ENCODE measurements at regions of chr19 and their contacts with region 1.

Region 1: DNA sequence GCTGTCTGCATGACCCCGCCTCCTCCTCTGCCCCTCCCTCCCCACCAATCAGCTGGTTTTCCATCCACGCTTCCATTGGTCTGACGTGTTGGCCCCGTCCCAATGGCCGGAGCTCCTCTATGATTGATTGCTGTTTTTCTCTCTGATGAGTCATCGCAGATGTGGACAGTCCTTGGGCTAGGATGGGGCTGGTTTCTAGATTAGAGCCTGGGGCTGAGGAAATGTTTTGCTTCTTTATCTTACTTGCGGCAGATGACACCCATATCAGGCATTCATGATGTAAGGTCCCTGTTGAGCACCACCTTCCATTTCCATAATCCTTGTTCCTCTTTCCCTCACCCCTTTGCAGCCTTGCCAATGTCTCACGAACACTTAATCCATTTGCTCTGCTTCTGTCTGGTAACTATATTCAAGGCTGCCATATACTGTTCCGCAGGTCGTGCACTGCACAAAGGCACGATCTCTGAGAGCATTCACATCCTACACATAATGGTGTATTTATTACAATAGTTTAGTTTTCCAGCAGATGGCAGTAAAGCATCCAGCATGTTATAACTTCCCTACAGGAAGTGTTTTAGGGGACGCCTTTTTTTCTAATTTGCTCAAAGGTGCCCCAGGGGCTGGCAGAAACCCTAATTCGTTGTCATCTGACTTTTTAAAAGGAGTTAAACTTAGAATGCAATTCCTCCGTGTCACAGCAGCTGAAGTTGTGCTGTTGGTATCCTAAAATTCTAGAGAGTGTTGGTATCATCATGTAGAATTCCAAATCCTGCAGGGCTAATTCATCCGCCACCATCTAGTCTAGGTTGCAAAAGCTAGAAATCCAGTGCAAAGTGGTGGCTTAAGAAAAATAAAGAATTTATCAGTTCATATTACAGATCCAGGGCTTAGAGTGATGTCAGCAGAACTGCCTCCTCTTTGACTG is 73.5 kb downstream of the MAP4K1 start:
- DNase-seq: peak; percentile 65
- H3K4me3 Mint-ChIP-seq: peak overlapping the region; percentile 51
- H3K27ac Mint-ChIP-seq: peak overlapping the region; percentile 30
- H3K4me1 Mint-ChIP-seq: peaks cover 24% of the 10 kb centered on the region
- H3K27me3 Mint-ChIP-seq: no peaks in the 10 kb centered on the region

Region 2: GRCh38 chr19:38496603-38497487 is 47.5 kb before region 1 on chr19:
- CTCF ChIA-PET with region 1: no interaction called
- POLR2A ChIA-PET with region 1: no interaction called
- intact Hi-C with region 1: no loop called
- DNase-seq: no peak
- H3K4me3 Mint-ChIP-seq: no peak overlapping the region
- H3K27ac Mint-ChIP-seq: no peak overlapping the region
- H3K4me1 Mint-ChIP-seq: no peaks in the 10 kb centered on the region
- H3K27me3 Mint-ChIP-seq: peaks cover 2% of the 10 kb centered on the region

Region 3: GRCh38 chr19:38514812-38515633 is 29.3 kb before region 1 on chr19:
- CTCF ChIA-PET with region 1: interaction called, 10 read pairs
- POLR2A ChIA-PET with region 1: no interaction called
- intact Hi-C with region 1: loop called (anchors 2 kb)
- DNase-seq: peak; percentile 86
- H3K4me3 Mint-ChIP-seq: no peak overlapping the region
- H3K27ac Mint-ChIP-seq: peak overlapping the region; percentile 33
- H3K4me1 Mint-ChIP-seq: peaks cover 22% of the 10 kb centered on the region
- H3K27me3 Mint-ChIP-seq: no peaks in the 10 kb centered on the region

Region 4: DNA sequence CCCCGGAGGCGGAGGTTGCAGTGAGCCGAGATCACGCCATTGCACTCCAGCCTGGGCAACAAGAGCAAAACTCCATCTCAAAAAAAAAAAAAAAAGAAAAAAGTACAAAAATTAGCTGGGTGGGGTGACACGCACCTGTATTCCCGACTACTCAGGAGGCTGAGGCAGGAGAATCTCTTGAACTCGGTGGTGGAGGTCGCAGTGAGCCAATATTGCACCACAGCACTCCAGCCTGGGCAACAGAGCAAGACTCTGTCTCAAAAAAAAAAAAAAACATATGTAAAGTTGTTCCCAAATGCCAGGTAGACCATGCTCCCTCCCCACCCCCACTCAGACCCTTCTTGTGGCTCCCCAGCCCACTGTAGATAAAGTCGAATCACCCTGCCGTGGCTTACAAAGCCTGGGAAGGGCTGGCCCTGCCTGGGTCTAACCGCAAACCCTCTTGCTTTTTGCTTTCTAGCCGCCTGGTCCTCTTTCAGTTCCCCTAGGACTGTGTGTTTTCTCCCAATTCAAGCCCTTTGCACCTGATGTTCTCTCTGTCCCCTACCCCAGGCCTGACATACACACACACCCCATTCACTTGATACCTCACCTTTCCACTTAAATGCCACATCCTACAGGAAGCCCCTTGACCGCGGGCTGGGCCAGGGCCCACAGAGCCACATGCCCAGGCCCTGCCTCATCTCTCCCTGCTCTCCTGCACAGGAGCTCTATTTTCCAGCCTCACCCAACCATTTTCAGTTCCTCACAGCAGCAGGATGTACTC is 39.1 kb after region 1 on chr19:
- CTCF ChIA-PET with region 1: no interaction called
- POLR2A ChIA-PET with region 1: no interaction called
- intact Hi-C with region 1: no loop called
- DNase-seq: no peak
- H3K4me3 Mint-ChIP-seq: no peak overlapping the region
- H3K27ac Mint-ChIP-seq: peak overlapping the region; percentile 2
- H3K4me1 Mint-ChIP-seq: peaks cover 11% of the 10 kb centered on the region
- H3K27me3 Mint-ChIP-seq: no peaks in the 10 kb centered on the region